Activated naive CD4-positive, alpha-beta T cell treated with anti-CD3 and anti-CD28 coated beads for 36 hours (primary cell): ENCODE measurements at regions of chr2 and their contacts with region 1.

Region 1: DNA sequence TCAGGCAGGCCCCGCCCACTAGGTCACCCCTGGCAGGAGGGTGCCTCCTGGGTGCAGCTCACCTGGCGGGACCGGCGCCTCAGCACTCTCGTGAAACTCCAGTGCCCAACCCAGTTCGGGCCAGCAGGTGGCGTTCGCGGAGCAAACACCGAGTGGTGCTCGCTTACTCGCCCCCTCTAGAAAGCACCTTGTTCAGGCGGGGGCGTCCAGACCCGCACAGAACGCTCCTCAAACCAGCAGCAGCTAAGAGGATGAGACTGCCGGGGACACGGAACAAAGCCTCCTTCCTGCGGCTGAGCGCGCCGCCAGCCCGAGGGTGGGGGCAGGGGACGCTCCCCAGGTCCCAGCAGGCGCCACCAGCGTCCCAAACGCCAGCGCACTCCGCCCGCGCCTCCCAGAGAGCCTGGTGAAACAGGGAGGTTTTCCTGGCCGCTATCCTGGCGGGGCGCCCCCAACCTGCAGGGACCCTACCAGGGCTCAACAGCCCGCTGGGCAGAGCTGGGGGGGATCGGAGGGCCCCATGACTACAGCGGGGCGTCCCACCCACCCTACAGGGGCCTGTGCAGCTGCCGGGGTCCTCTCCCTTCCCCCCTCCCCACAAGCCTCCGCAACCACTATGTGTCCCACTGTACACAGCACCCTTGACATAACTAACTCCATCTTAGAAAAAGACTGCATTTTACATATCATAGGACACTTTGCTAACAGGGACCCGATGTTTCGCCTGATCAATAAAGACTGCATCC is 44.7 kb downstream of the MRPS5 start:
- DNase-seq: peak; percentile 96
- H3K4me3 Mint-ChIP-seq: peak overlapping the region; percentile 73
- H3K27ac Mint-ChIP-seq: peak overlapping the region; percentile 82
- H3K4me1 Mint-ChIP-seq: peaks cover 61% of the 10 kb centered on the region
- H3K27me3 Mint-ChIP-seq: no peaks in the 10 kb centered on the region

Region 2: GRCh38 chr2:94939349-94939748 is 137.6 kb before region 1 on chr2:
- CTCF ChIA-PET with region 1: no interaction called
- intact Hi-C with region 1: no loop called
- DNase-seq: no peak
- H3K4me3 Mint-ChIP-seq: no peak overlapping the region
- H3K27ac Mint-ChIP-seq: no peak overlapping the region
- H3K4me1 Mint-ChIP-seq: no peaks in the 10 kb centered on the region
- H3K27me3 Mint-ChIP-seq: peaks cover 27% of the 10 kb centered on the region

Region 3: DNA sequence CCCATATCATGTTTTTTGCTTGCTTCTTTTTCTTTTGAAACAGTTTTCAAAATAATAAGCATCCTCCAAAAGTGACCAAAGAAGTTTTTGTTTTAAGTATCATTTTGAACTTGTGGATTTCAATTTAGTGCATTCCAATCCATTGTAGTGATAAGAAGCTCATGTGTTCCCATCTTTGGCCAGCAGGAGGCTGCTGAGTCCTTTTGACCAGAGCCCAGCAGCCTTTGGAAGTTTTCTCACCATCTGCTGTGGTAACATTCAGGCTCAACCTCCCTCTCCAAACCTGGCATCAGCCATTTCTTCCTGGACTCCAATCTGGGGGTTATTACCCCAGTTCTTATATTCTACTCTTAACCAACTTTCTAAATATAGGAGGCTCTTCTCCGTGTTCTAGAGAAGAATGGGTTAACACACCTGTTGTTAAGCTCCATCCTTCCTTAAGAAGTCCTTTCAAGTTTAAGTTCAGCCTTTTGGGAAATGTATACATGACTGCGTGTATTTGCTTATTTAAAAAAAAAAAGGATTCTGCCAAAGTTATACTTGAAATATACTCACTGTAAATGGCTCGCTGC is 90.5 kb before region 1 on chr2:
- CTCF ChIA-PET with region 1: interaction called, 9 read pairs
- intact Hi-C with region 1: loop called (anchors 1 kb)
- DNase-seq: peak; percentile 64
- H3K4me3 Mint-ChIP-seq: no peak overlapping the region
- H3K27ac Mint-ChIP-seq: no peak overlapping the region
- H3K4me1 Mint-ChIP-seq: no peaks in the 10 kb centered on the region
- H3K27me3 Mint-ChIP-seq: peaks cover 12% of the 10 kb centered on the region

Region 4: DNA sequence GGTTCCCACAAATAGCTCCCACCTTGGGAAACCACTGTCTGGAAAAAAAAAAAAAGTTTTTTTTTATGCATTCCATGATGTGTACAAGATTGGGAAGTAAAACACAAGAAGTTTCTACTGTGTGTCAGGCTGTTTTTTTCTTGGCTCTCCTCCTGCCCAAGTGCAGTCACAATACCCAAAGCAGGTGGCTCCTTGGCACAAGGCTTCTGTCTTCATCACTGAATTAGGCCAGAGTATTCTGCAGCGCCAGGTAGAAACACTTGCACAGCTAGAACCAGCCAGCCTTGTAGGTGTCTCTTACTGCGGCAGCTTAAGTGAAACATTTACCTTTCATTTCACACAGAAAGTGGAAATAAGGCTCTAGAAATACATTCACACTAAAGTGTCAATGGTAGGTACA is 75.3 kb before region 1 on chr2:
- CTCF ChIA-PET with region 1: no interaction called
- intact Hi-C with region 1: no loop called
- DNase-seq: no peak
- H3K4me3 Mint-ChIP-seq: no peak overlapping the region
- H3K27ac Mint-ChIP-seq: no peak overlapping the region
- H3K4me1 Mint-ChIP-seq: peaks cover 4% of the 10 kb centered on the region
- H3K27me3 Mint-ChIP-seq: peaks cover 20% of the 10 kb centered on the region

Region 5: GRCh38 chr2:95034221-95034620 is 42.7 kb before region 1 on chr2:
- CTCF ChIA-PET with region 1: interaction called, 20 read pairs
- intact Hi-C with region 1: no loop called
- DNase-seq: peak; percentile 49
- H3K4me3 Mint-ChIP-seq: no peak overlapping the region
- H3K27ac Mint-ChIP-seq: peak overlapping the region; percentile 23
- H3K4me1 Mint-ChIP-seq: peaks cover 80% of the 10 kb centered on the region
- H3K27me3 Mint-ChIP-seq: no peaks in the 10 kb centered on the region

Region 6: GRCh38 chr2:95062242-95063085 is 14.5 kb before region 1 on chr2:
- CTCF ChIA-PET with region 1: interaction called, 241 read pairs
- intact Hi-C with region 1: loop called (anchors 1 kb)
- DNase-seq: no peak
- H3K4me3 Mint-ChIP-seq: peak overlapping the region; percentile 22
- H3K27ac Mint-ChIP-seq: peak overlapping the region; percentile 75
- H3K4me1 Mint-ChIP-seq: peaks cover 35% of the 10 kb centered on the region
- H3K27me3 Mint-ChIP-seq: no peaks in the 10 kb centered on the region

Region 7: DNA sequence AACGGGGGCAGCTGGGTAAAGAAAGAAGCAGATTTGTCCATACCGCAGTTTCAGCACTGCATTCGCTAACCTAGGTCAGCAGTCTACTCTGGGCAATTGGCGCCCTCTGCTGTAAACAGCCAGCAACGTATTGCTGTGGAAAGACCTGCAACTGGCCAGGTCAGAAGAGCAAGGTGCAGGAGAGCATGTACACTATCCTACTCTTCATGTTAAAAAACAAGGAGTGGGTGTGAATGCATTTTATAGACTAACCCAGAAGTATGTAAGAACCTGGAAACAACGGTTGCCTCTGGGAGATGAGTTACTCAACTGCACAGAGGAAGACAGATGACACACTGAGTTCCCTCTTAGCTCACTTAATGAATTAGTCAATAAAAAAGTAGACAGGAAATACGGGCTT is 38.5 kb after region 1 on chr2:
- CTCF ChIA-PET with region 1: interaction called, 152 read pairs
- intact Hi-C with region 1: loop called (anchors 1 kb)
- DNase-seq: peak; percentile 88
- H3K4me3 Mint-ChIP-seq: no peak overlapping the region
- H3K27ac Mint-ChIP-seq: no peak overlapping the region
- H3K4me1 Mint-ChIP-seq: peaks cover 35% of the 10 kb centered on the region
- H3K27me3 Mint-ChIP-seq: no peaks in the 10 kb centered on the region

Region 8: DNA sequence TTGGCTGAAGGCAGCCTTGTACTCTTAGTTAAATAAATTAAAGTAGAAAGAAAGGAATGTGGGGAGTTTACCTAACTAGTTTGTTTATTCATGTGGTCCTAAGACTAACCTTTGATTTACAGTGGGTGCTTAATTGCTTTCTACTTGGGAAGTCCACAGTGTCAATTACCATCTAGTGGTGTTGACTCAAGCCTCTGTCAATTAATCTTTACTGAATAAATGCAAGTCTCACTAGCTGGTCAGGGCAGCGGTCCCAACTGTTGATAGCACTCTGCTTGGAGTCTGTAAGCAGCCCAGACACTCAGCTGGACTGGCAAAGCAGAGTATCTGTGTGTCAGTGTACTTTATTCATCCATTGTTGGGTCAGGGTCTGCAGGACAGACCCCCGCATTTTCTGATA is 66.9 kb after region 1 on chr2:
- CTCF ChIA-PET with region 1: no interaction called
- intact Hi-C with region 1: no loop called
- DNase-seq: no peak
- H3K4me3 Mint-ChIP-seq: no peak overlapping the region
- H3K27ac Mint-ChIP-seq: no peak overlapping the region
- H3K4me1 Mint-ChIP-seq: no peaks in the 10 kb centered on the region
- H3K27me3 Mint-ChIP-seq: no peaks in the 10 kb centered on the region

Region 9: DNA sequence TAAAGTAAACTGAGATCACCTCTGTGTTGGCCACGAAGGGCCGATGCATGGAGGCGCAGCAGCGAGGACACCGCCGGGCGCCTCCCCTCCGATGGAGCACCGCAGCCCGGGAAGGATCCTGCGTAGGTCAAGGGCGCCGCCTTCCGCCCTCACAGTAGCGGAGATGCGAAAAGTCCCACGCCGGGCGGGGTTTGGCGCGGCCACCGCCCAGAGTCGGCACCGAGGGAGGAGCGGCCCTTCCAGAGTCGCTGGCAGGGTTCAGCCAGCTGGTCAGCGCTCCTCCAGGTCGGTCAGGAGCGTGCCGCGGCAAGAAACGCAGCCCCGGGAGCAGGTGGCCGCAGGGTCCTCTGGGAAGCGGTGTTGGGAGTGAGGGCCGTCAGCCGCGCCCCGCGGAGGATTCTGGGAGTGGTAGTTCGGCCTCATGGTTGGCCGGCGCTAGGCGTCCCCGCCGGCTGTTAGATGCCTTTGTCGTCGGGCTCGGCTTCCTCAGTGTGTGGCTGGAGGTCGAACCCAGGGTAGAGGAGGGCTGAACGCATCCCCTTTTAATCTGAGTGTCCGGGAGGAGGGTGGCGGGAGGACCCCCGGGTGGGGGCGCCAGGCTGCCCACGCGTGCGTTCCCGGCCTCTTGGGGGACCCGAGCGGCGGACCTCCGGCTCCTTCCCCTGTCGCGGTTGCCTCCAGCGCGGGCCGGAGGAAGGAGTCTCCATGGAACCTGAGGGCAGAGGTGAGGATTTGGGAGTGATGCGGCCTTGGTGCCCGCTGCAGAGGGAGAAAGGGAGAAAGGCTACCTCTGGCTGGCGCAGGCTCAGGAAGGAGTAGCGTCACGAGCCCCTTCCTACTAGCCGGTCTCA is 130.4 kb after region 1 on chr2 and contains the start of gene ZNF892:
- CTCF ChIA-PET with region 1: interaction called, 5 read pairs
- intact Hi-C with region 1: loop called (anchors 1 kb)
- DNase-seq: peak; percentile 86
- H3K4me3 Mint-ChIP-seq: peak within 1 kb of the TSS; percentile 88
- H3K27ac Mint-ChIP-seq: peak within 1 kb of the TSS; percentile 57
- H3K4me1 Mint-ChIP-seq: peaks cover 12% of the 10 kb centered on the region
- H3K27me3 Mint-ChIP-seq: no peaks in the 10 kb centered on the region
- total RNA-seq, gene ZNF892: 2.7 to 3.1 TPM